ENCODE measurements at regions of chr3 and their contacts with region 1.

Region 1: GRCh38 chr3:46368569-46368968 is 2.2 kb upstream of the CCR5 start:
- DNase-seq: peak; percentile 80
- H3K4me3 Mint-ChIP-seq: no peak overlapping the region
- H3K27ac Mint-ChIP-seq: no peak overlapping the region
- H3K4me1 Mint-ChIP-seq: peaks cover 58% of the 10 kb centered on the region
- H3K27me3 Mint-ChIP-seq: peaks cover 24% of the 10 kb centered on the region

Region 2: DNA sequence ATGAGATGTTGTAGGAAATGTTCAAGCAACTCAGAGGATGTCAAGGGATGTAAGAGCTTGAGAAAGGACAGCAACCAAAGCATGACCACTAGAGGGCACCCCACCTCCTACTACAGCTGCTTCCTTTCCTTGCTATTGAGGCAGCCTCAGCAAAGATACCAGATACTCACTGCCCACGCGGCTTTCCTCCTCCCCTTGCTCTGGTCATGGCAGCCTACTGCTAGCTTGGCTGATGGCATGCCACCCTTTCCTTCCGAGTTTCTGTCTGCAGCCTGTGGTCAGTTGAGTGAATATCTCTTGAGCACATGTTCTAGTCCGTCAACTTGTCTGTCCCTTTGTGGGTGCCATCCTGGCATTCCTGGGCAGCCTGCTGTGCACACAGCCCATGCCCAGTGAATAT is 429.7 kb before region 1 on chr3:
- CTCF ChIA-PET with region 1: interaction called, 19 read pairs
- POLR2A ChIA-PET with region 1: interaction called, 7 read pairs
- intact Hi-C with region 1: no loop called
- DNase-seq: peak; percentile 91
- H3K4me3 Mint-ChIP-seq: no peak overlapping the region
- H3K27ac Mint-ChIP-seq: no peak overlapping the region
- H3K4me1 Mint-ChIP-seq: peaks cover 34% of the 10 kb centered on the region
- H3K27me3 Mint-ChIP-seq: peaks cover 2% of the 10 kb centered on the region

Region 3: GRCh38 chr3:46098319-46098761 is 270.2 kb before region 1 on chr3:
- CTCF ChIA-PET with region 1: interaction called, 47 read pairs
- POLR2A ChIA-PET with region 1: interaction called, 21 read pairs
- intact Hi-C with region 1: loop called (anchors 1 kb)
- DNase-seq: peak; percentile 76
- H3K4me3 Mint-ChIP-seq: peak overlapping the region; percentile 36
- H3K27ac Mint-ChIP-seq: peak overlapping the region; percentile 85
- H3K4me1 Mint-ChIP-seq: peaks cover 42% of the 10 kb centered on the region
- H3K27me3 Mint-ChIP-seq: peaks cover 30% of the 10 kb centered on the region

Region 4: DNA sequence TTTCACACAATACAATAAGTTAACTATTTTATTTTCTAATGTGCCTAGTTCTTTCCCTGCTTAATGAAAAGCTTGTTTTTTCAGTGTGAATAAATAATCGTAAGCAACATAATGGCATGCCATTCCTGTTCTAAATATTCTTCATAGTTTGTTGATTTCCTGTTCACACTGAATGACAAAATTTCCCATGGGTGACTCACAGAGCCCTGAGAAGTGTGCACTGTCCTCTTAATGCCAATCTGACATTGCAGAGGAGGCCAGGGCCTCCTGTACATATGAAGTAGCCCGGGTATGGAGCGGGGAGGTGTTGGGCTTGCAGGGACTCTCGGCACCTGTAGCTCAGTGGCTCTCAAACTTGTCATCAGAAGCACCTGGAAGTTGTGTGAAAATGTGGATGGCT is 102.0 kb before region 1 on chr3:
- CTCF ChIA-PET with region 1: interaction called, 131 read pairs
- POLR2A ChIA-PET with region 1: interaction called, 19 read pairs
- intact Hi-C with region 1: no loop called
- DNase-seq: no peak
- H3K4me3 Mint-ChIP-seq: no peak overlapping the region
- H3K27ac Mint-ChIP-seq: no peak overlapping the region
- H3K4me1 Mint-ChIP-seq: peaks cover 27% of the 10 kb centered on the region
- H3K27me3 Mint-ChIP-seq: peaks cover 18% of the 10 kb centered on the region

Region 5: GRCh38 chr3:46297658-46298463 is 70.7 kb before region 1 on chr3:
- CTCF ChIA-PET with region 1: interaction called, 74 read pairs
- POLR2A ChIA-PET with region 1: interaction called, 36 read pairs
- intact Hi-C with region 1: loop called (anchors 1 kb)
- DNase-seq: no peak
- H3K4me3 Mint-ChIP-seq: no peak overlapping the region
- H3K27ac Mint-ChIP-seq: no peak overlapping the region
- H3K4me1 Mint-ChIP-seq: peaks cover 89% of the 10 kb centered on the region
- H3K27me3 Mint-ChIP-seq: peaks cover 8% of the 10 kb centered on the region

Region 6: DNA sequence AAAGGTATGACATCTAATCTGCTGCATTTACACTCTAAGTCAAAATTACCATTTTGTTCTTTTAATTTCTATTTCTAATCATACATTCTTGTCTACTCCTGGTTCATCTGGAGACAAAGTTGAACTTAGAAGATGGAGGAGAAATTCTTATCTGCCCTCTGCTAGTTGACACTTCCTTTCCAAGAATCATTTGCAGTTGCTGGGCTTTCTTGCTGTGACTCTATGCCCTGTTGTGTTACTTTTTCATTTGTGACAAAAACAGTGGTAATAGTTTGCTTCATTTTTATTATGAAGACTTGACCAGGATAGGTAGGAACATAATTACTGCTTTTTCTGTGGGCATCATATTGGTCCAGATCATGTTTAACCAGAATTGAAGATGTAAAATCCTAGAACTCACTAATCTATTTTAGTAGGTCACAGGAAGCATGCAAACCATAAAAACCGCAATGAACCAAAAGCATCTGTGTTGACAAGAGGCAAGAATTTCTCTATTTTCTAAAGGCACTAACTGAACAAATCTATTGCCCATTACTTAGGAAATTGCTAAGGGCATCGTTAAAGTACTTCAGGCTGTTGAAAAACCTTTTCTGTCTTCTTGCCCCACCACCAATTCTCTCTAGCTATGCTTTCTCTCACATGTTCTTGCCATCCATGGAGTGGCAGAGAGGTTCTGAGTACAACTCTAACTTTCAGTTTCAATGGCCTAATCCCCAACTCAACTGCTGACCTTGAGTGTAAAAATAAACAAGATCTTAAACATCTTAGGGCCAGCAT is 18.9 kb before region 1 on chr3:
- CTCF ChIA-PET with region 1: interaction called, 24 read pairs
- POLR2A ChIA-PET with region 1: interaction called, 27 read pairs
- intact Hi-C with region 1: loop called (anchors 1 kb)
- DNase-seq: no peak
- H3K4me3 Mint-ChIP-seq: no peak overlapping the region
- H3K27ac Mint-ChIP-seq: peak overlapping the region; percentile 73
- H3K4me1 Mint-ChIP-seq: peaks cover 58% of the 10 kb centered on the region
- H3K27me3 Mint-ChIP-seq: peaks cover 17% of the 10 kb centered on the region